ENCODE measurements at regions of chr3 and their contacts with region 1.

Region 1: GRCh38 chr3:17233398-17233800 is 348.6 kb downstream of the PLCL2 start:
- DNase-seq: peak; percentile 27
- H3K4me3 Mint-ChIP-seq: no peak overlapping the region
- H3K27ac Mint-ChIP-seq: no peak overlapping the region
- H3K4me1 Mint-ChIP-seq: peaks cover 13% of the 10 kb centered on the region
- H3K27me3 Mint-ChIP-seq: no peaks in the 10 kb centered on the region

Region 2: GRCh38 chr3:16828815-16829214 is 404.6 kb before region 1 on chr3:
- intact Hi-C with region 1: loop called (anchors 1 kb)
- DNase-seq: peak; percentile 22
- H3K4me3 Mint-ChIP-seq: no peak overlapping the region
- H3K27ac Mint-ChIP-seq: no peak overlapping the region
- H3K4me1 Mint-ChIP-seq: peaks cover 21% of the 10 kb centered on the region
- H3K27me3 Mint-ChIP-seq: peaks cover 17% of the 10 kb centered on the region

Region 3: DNA sequence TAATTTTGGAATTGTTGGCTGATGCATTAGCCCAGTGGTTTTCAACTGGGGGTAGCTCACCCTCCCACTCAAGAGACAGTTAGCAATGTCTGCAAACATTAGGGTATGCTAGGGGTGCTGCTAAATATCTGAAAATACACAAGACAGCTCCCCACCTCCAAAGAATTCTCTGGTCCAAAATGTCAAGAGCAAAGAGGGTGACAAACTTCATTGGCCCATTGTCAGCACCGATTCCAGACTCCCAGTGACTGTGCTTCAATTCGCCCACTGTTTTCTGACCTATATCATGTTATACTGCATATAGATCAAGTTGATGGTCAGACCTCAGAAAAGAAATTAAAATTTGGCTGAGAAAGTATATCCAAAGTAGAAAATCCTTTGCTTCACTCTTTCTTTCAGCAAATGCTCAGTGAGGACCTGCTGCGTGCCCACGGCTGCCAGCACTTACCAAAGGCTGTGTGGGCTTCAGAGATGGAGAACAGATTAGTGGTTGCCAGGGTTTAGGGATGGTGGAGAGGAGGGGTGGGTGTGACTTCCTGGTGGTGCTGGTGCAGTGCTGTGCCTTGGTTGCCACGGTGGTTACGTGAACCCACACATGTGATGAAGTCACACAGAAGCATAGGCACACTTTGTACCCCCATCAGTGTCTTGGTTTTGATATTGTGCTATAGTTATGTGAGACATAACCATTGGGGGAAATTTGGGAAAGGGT is 144.6 kb before region 1 on chr3:
- intact Hi-C with region 1: loop called (anchors 5 kb)
- DNase-seq: no peak
- H3K4me3 Mint-ChIP-seq: peak overlapping the region; percentile 27
- H3K27ac Mint-ChIP-seq: peak overlapping the region; percentile 25
- H3K4me1 Mint-ChIP-seq: peaks cover 39% of the 10 kb centered on the region
- H3K27me3 Mint-ChIP-seq: no peaks in the 10 kb centered on the region

Region 4: GRCh38 chr3:17204049-17204650 is 29.2 kb before region 1 on chr3:
- intact Hi-C with region 1: no loop called
- DNase-seq: no peak
- H3K4me3 Mint-ChIP-seq: no peak overlapping the region
- H3K27ac Mint-ChIP-seq: no peak overlapping the region
- H3K4me1 Mint-ChIP-seq: peaks cover 5% of the 10 kb centered on the region
- H3K27me3 Mint-ChIP-seq: peaks cover 4% of the 10 kb centered on the region

Region 5: DNA sequence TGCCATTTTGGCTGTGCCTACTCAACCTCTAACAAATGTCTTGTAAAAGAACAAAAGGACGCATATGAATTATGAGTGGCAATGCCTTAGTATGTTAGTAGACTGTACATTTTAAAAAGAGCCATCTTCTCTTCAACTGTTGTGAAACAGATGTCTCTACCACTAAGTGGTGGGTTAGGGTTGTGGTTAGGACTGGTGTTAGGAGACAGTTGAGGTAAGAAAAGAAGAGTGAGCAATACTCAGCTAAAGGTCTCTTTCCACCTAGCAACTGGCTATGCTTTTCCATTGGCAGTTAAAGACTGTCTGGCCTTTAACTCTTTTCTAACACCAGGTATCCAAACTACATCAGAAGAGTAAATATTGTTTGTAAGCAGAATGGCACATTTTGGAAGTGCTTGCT is 730.7 kb after region 1 on chr3:
- intact Hi-C with region 1: no loop called
- DNase-seq: no peak
- H3K4me3 Mint-ChIP-seq: no peak overlapping the region
- H3K27ac Mint-ChIP-seq: no peak overlapping the region
- H3K4me1 Mint-ChIP-seq: no peaks in the 10 kb centered on the region
- H3K27me3 Mint-ChIP-seq: peaks cover 2% of the 10 kb centered on the region